ENCODE measurements at regions of chr10 and their contacts with region 1.

Region 1: GRCh38 chr10:75395066-75395931 is 6.3 kb downstream of the ZNF503 start:
- DNase-seq: peak; percentile 71
- ATAC-seq: peak; percentile 13
- H3K4me3 Mint-ChIP-seq: peak overlapping the region; percentile 64
- H3K27ac Mint-ChIP-seq: no peak overlapping the region
- H3K4me1 Mint-ChIP-seq: peaks cover 23% of the 10 kb centered on the region
- H3K27me3 Mint-ChIP-seq: peaks cover 100% of the 10 kb centered on the region
- CTCF ChIP-seq: peak; percentile 98

Region 2: GRCh38 chr10:75283671-75284470 is 111.4 kb before region 1 on chr10:
- CTCF ChIA-PET with region 1: interaction called, 10 read pairs
- POLR2A ChIA-PET with region 1: no interaction called
- DNase-seq: no peak
- ATAC-seq: peak; percentile 18
- H3K4me3 Mint-ChIP-seq: peak overlapping the region; percentile 74
- H3K27ac Mint-ChIP-seq: no peak overlapping the region
- H3K4me1 Mint-ChIP-seq: peaks cover 14% of the 10 kb centered on the region
- H3K27me3 Mint-ChIP-seq: peaks cover 51% of the 10 kb centered on the region
- CTCF ChIP-seq: no peak

Region 3: GRCh38 chr10:75294866-75295701 is 100.2 kb before region 1 on chr10:
- CTCF ChIA-PET with region 1: interaction called, 15 read pairs
- POLR2A ChIA-PET with region 1: no interaction called
- DNase-seq: peak; percentile 60
- ATAC-seq: peak; percentile 85
- H3K4me3 Mint-ChIP-seq: peak overlapping the region; percentile 68
- H3K27ac Mint-ChIP-seq: no peak overlapping the region
- H3K4me1 Mint-ChIP-seq: 0 out of 2 replicates have a peak, but pooled peaks cover 2% of the 10 kb centered on the region
- H3K27me3 Mint-ChIP-seq: peaks cover 36% of the 10 kb centered on the region
- CTCF ChIP-seq: no peak

Region 4: DNA sequence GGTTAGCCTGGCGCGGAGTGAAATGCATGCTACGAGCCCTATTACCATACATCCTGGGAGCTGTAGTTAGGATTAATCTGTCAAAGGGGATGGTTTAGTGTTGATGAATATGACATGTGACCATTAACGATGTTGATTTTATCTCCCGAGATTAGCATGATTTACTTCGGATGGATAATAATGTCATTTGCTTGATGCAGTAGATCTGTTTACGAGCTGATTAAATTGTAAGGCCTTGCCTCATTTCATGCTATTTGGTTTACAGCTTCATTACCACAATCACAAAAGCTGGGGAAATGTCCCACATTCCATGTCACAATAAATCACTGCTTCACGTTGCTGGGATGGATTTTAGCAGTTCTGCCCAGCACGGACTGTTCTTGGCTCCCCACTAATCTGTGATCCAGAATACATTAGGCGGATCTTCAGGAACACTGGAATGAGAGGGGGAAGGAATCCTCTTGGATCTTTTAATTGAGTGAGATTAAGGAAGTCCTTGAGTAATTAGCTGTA is 16.0 kb before region 1 on chr10:
- CTCF ChIA-PET with region 1: interaction called, 11 read pairs
- POLR2A ChIA-PET with region 1: no interaction called
- DNase-seq: no peak
- ATAC-seq: no peak
- H3K4me3 Mint-ChIP-seq: no peak overlapping the region
- H3K27ac Mint-ChIP-seq: no peak overlapping the region
- H3K4me1 Mint-ChIP-seq: peaks cover 5% of the 10 kb centered on the region; the same call in 1 of the 2 replicates
- H3K27me3 Mint-ChIP-seq: peaks cover 6% of the 10 kb centered on the region; the same call in 1 of the 2 replicates
- CTCF ChIP-seq: no peak

Region 5: DNA sequence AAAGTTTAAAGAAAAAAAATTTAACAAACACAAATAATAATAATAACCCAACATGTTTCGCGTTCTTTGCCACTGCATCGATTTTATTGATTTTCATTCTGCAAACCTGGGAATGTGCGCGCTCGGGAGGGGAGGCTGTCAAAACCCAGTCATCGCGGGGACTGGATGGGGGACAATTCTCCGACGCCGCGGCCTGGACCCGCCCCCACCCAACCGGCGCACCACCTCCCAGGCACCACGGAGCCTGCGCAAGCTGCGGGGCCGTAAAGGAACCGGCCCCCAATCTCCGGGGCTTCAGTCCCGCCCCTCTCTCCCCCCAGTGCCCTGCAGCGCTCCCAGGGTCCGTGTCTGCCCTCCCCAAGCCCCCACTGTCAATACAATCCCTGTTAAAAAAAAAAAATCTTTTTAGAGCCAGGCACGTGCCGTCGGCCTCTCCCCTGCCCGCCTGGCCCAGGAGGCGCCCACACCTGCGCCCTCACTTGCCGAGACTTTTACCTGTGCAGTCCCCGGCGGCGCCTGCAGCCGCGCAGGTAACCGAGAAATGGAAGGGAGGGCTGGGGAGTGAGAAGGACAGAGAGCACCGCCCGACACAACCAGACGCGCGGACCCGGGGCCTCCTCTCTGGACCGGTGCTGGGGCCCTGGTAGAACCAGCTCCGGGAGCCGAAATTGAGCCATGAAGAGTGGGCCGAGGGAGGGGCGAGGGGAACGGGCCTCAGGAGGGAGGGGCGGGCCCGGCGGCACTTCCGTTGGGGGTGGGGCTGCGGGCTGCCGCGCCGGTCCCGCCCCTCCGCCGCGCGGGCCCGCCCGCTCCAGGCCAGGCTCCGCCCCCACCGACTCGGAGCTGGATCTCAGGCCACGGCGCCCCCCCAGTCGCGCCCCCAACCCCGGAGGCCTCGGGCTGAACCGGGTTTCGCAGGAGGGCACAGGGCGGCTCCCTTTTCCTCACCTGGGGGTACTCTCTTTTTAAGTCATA is 13.9 kb after region 1 on chr10:
- CTCF ChIA-PET with region 1: interaction called, 13 read pairs
- POLR2A ChIA-PET with region 1: no interaction called
- DNase-seq: peak; percentile 75
- ATAC-seq: peak; percentile 75
- H3K4me3 Mint-ChIP-seq: peak overlapping the region; percentile 77
- H3K27ac Mint-ChIP-seq: no peak overlapping the region
- H3K4me1 Mint-ChIP-seq: peaks cover 38% of the 10 kb centered on the region
- H3K27me3 Mint-ChIP-seq: peaks cover 99% of the 10 kb centered on the region
- CTCF ChIP-seq: no peak

Region 6: GRCh38 chr10:75431180-75432111 is 36.1 kb after region 1 on chr10 and contains the start of gene LRMDA:
- CTCF ChIA-PET with region 1: interaction called, 10 read pairs
- POLR2A ChIA-PET with region 1: no interaction called
- DNase-seq: peak; percentile 38
- ATAC-seq: peak; percentile 41
- H3K4me3 Mint-ChIP-seq: peak within 1 kb of the TSS; percentile 68
- H3K27ac Mint-ChIP-seq: no peak within 1 kb of the TSS
- H3K4me1 Mint-ChIP-seq: peaks cover 42% of the 10 kb centered on the region
- H3K27me3 Mint-ChIP-seq: peaks cover 96% of the 10 kb centered on the region
- CTCF ChIP-seq: no peak
- total RNA-seq, gene LRMDA: 0.48 to 0.92 TPM (median 0.78 TPM) in 3 replicates

Region 7: GRCh38 chr10:75651417-75651816 is 256.1 kb after region 1 on chr10:
- CTCF ChIA-PET with region 1: interaction called, 30 read pairs
- POLR2A ChIA-PET with region 1: no interaction called
- DNase-seq: peak; percentile 41
- ATAC-seq: peak; percentile 74
- H3K4me3 Mint-ChIP-seq: no peak overlapping the region
- H3K27ac Mint-ChIP-seq: no peak overlapping the region
- H3K4me1 Mint-ChIP-seq: peaks cover 2% of the 10 kb centered on the region; the same call in 1 of the 2 replicates
- H3K27me3 Mint-ChIP-seq: peaks cover 55% of the 10 kb centered on the region
- CTCF ChIP-seq: no peak